ENCODE measurements at regions of chr18 and their contacts with region 1.

Region 1: DNA sequence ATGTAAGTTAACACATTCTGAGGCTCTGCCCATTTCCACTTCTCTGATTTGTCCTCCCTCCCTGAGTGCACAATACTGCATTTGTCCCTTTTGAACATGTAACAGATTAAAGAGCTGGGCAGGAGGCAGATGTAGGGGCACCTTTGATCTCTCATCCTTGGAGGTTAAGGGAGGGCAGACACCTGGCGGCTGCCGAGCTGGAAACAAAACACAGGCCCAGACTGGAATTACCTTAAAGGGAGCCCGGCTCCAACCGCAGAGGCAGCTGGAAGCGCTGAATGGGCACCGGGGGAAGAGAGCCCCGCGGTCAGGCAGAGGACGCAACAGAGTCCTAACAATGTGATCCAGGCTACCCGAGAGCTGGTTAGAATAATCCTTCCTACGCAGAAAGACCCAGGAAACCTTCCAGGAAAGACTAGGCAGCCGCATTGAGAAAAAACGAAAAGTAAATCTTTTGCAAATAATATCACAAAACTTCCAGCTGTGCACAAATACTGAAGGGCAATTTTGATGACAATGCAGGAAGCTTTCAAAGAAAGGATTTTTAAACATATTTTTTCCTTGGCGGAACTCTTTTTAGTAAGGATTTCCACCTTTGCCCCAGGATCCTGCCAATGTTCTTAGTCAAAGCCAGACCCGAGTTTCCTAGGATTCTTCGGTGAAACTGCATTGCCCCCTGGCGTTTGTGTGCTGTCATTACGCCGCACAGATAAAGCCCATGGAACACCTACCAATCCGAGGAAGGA is 216.0 kb downstream of the TGIF1 start:
- DNase-seq: peak; percentile 76
- ATAC-seq: peak; percentile 87
- H3K4me3 Mint-ChIP-seq: no peak overlapping the region
- H3K27ac Mint-ChIP-seq: no peak overlapping the region
- H3K4me1 Mint-ChIP-seq: peaks cover 20% of the 10 kb centered on the region
- H3K27me3 Mint-ChIP-seq: no peaks in the 10 kb centered on the region
- CTCF ChIP-seq: peak; percentile 99

Region 2: DNA sequence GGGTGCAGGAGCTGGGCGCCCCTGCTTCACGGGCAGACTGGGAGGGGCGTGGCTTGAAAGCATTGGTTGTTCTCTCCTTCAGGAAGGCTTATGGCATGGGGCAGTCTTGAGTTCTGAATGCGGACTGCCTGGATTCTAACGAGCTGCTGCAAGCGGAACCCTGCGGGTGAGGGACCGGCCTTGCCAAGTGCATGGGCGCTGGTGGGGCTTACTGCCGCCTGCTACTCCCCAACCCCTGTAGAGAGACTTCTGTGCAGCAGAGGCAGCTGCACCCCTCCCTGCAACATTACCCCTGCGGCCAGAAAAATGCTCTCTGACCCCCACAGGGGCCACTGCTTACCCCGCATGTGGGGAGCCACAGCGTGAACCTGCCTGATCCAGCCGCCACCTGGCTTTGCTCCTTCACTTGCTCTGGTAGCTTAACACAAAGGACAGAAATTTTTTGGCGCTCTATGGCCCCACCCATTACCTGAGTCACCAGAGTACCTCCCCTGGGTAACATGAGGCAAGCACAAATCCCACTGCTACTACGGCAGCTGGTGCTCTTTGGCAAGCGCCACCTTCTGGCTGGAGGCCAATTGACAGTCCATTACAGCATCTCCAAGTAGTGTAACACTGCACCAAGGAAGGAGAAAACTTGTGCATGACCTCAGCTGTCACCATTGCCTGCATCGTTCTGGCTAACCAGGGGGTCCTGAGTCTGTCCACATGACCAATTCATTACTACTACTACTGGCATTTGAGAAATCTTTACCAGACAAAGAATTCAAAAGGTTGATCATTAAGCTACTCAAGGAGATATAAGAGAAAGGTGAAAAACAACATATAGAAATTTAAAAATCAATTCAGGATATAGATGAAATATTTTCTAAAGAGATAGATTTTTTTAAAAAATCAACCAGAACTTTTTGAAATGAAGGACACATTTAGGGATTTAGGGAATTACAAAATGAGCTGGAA is 368.6 kb before region 1 on chr18:
- CTCF ChIA-PET with region 1: interaction called, 51 read pairs
- POLR2A ChIA-PET with region 1: no interaction called
- intact Hi-C with region 1: no loop called
- DNase-seq: peak; percentile 99
- ATAC-seq: peak; percentile 99
- H3K4me3 Mint-ChIP-seq: peak overlapping the region; percentile 92
- H3K27ac Mint-ChIP-seq: peak overlapping the region; percentile 86
- H3K4me1 Mint-ChIP-seq: peaks cover 5% of the 10 kb centered on the region
- H3K27me3 Mint-ChIP-seq: peaks cover 24% of the 10 kb centered on the region
- CTCF ChIP-seq: peak; percentile 83

Region 3: DNA sequence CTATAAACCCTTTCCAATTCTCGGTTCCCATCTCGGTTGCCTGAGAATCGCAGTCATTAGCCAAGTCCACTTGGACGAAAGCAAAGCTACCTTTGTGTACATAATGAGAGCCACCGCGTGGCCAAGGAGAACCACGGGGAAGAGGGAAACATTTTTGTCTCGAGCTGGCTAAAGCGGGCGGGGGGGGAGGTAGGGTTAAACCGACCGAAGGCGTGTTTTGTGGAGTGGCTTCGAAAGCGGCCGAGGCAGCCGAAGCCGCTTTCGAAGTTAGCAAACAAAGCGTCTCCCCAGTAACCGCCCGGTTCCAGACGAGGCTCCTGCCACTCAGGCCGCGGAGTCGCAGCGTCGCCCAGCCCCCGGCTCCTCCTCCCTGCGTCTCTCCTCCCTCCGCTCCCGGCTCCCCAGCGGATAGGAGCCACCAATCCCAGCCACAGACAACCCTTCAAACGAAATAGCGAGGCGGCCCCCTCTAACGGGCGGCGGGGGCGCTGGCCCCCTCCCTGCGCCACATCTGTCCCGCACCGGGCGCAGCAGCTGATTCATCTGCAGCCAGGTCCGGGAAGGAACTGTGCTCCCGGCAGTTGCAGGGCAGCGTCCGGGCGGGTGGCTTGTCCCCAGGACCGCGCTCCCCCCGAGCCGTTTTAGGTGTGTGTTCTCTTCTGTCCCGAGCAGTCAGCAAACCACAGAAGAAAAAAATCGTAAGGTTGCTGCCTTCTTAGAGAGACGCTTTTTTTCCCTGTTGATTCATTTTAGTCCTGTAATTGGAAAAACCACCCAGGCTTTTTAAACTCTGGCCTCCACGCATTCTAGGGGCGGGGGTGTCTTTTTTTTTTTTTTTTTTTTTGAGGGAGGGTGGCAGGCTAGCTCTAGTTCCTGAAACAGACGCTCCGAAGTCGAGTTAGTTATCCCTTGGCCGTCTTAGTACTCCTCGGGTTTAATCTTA is 217.8 kb before region 1 on chr18:
- CTCF ChIA-PET with region 1: interaction called, 60 read pairs
- POLR2A ChIA-PET with region 1: interaction called, 6 read pairs
- intact Hi-C with region 1: loop called (anchors 5 kb)
- DNase-seq: peak; percentile 92
- ATAC-seq: peak; percentile 69
- H3K4me3 Mint-ChIP-seq: peak overlapping the region; percentile 94
- H3K27ac Mint-ChIP-seq: peak overlapping the region; percentile 92
- H3K4me1 Mint-ChIP-seq: peaks cover 19% of the 10 kb centered on the region
- H3K27me3 Mint-ChIP-seq: no peaks in the 10 kb centered on the region
- CTCF ChIP-seq: no peak

Region 4: GRCh38 chr18:3593904-3594661 is 71.9 kb before region 1 on chr18:
- CTCF ChIA-PET with region 1: interaction called, 91 read pairs
- POLR2A ChIA-PET with region 1: interaction called, 7 read pairs
- intact Hi-C with region 1: no loop called
- DNase-seq: peak; percentile 95
- ATAC-seq: peak; percentile 85
- H3K4me3 Mint-ChIP-seq: peak overlapping the region; percentile 82
- H3K27ac Mint-ChIP-seq: peak overlapping the region; percentile 95
- H3K4me1 Mint-ChIP-seq: peaks cover 50% of the 10 kb centered on the region
- H3K27me3 Mint-ChIP-seq: no peaks in the 10 kb centered on the region
- CTCF ChIP-seq: peak; percentile 81

Region 5: DNA sequence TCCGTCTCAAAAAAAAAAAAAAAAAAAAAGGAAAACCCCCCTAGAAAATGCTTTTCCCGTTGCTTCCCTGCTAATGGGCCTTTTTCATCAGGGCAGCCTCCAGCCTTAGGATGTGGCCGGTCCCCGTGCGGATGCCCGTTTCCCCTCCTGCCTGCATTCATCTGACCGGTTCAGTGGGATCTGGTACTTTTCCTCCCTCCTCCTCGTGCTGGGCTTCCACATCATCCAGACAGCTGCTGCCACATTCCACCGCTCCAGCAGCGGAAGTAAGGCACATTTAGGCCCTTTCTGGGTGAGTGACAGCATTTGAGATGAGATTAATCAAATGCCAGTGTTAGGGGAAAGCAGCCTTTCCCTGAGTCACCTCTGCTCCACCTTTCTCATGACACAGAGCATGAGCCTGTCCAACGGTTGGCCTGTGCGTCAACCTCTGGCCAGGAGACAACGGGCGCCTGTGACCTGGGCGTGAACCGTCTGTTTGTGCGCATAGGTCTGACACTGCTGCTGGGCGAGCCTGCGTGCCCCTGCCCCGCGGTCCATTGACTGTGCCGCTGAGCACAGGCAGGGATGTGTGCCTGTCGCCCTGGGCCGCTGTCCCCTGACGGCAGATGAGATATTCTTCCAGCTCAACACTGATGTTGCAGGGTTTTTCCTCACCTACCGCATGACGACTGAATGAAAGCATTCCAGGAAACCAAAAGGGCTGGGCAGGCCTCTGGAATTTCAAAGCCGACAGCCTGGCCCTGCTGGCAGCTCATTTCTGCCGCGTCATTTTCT is 42.0 kb before region 1 on chr18:
- CTCF ChIA-PET with region 1: interaction called, 10 read pairs
- POLR2A ChIA-PET with region 1: no interaction called
- intact Hi-C with region 1: no loop called
- DNase-seq: peak; percentile 57
- ATAC-seq: peak; percentile 19
- H3K4me3 Mint-ChIP-seq: peak overlapping the region; percentile 60
- H3K27ac Mint-ChIP-seq: peak overlapping the region; percentile 92
- H3K4me1 Mint-ChIP-seq: peaks cover 32% of the 10 kb centered on the region
- H3K27me3 Mint-ChIP-seq: no peaks in the 10 kb centered on the region
- CTCF ChIP-seq: no peak

Region 6: GRCh38 chr18:3869848-3870247 is 203.9 kb after region 1 on chr18:
- CTCF ChIA-PET with region 1: interaction called, 11 read pairs
- POLR2A ChIA-PET with region 1: no interaction called
- intact Hi-C with region 1: no loop called
- DNase-seq: no peak
- ATAC-seq: peak; percentile 37
- H3K4me3 Mint-ChIP-seq: no peak overlapping the region
- H3K27ac Mint-ChIP-seq: no peak overlapping the region
- H3K4me1 Mint-ChIP-seq: no peaks in the 10 kb centered on the region
- H3K27me3 Mint-ChIP-seq: peaks cover 12% of the 10 kb centered on the region
- CTCF ChIP-seq: peak; percentile 17